ENCODE measurements at regions of chr6 and their contacts with region 1.

Region 1: GRCh38 chr6:111565326-111566221 is 40.1 kb downstream of the TRAF3IP2 start:
- DNase-seq: no peak
- H3K4me3 ChIP-seq: no peak overlapping the region
- H3K27ac ChIP-seq: peak overlapping the region; percentile 46
- H3K4me1 ChIP-seq: peaks cover 3% of the 10 kb centered on the region
- H3K27me3 ChIP-seq: no peaks in the 10 kb centered on the region
- CTCF ChIP-seq: peak; percentile 18

Region 2: DNA sequence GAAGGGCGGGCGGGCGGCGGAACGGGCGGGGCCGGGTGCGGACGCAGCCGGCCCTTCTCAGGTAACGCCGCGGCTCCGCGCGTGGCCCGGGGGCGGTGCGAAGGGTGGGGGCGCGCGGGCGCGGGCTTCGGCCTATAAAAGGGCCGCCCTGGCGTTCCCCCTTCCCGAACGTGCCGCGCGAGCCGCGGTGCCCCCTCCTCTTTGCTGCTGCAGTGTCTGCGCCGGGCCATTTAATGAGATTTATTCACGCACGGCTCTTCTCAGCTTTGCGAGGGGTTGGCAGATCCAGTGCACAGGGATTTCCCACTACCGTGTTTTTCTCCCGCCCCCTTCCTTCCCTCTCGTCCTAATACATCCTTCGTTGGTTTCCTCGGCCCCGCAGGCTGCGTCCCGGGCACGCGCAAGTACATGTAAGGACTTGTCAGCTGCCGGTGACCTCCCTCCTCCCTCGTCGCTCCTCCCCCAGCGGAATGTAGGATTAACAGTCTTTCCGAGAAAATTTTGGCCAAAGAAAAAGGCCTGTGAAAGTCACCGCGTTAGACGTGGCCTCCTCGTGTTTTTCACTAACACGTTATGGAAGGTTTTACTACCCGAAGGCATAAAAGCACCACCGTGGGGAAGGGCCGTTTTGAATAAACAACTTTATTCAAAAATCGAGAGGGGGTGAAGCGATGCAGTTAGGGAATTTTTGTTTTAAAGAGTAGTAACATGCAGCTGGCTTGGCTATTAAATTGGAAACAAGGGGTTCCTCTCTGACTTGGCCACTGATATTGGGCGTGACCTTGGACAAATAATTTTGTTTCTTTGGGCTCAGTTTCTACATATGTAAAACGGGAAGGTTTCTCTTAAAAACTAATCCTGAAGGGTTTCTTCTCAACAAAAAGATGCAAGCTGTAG is 81.6 kb before region 1 on chr6:
- intact Hi-C with region 1: loop called (anchors 10 kb)
- DNase-seq: peak; percentile 93
- H3K4me3 ChIP-seq: peak overlapping the region; percentile 85
- H3K27ac ChIP-seq: peak overlapping the region; percentile 99
- H3K4me1 ChIP-seq: peaks cover 5% of the 10 kb centered on the region
- H3K27me3 ChIP-seq: no peaks in the 10 kb centered on the region
- CTCF ChIP-seq: no peak

Measured in colonic mucosa (tissue), 4 donors.